H1 (cell line): ENCODE measurements at regions of chr15 and their contacts with region 1.

Region 1: GRCh38 chr15:92409006-92409405 is 15.3 kb downstream of the ST8SIA2 start:
- DNase-seq: no peak
- H3K4me3 ChIP-seq: no peak overlapping the region
- H3K27ac ChIP-seq: no peak overlapping the region
- H3K4me1 ChIP-seq: peaks cover 0 to 6% (median 0%) of the 10 kb centered on the region in 4 experiments; a peak in 2 of 7 replicates
- H3K27me3 ChIP-seq: peaks cover 0 to 2% (median 0%) of the 10 kb centered on the region in 4 experiments; a peak in 1 of 7 replicates
- CTCF ChIP-seq: no peak
- EP300 ChIP-seq: no peak
- POLR2A ChIP-seq: no peak
- RAD21 ChIP-seq: no peak

Region 2: GRCh38 chr15:92421976-92422375 is 13.0 kb after region 1 on chr15:
- CTCF ChIA-PET with region 1: interaction called, 26 read pairs
- POLR2A ChIA-PET with region 1: interaction called, 3 read pairs
- DNase-seq: no peak
- H3K4me3 ChIP-seq: no peak overlapping the region
- H3K27ac ChIP-seq: no peak overlapping the region
- H3K4me1 ChIP-seq: peaks cover 0 to 4% (median 0%) of the 10 kb centered on the region in 4 experiments; a peak in 4 of 7 replicates
- H3K27me3 ChIP-seq: no peaks in the 10 kb centered on the region
- CTCF ChIP-seq: no peak
- EP300 ChIP-seq: no peak
- POLR2A ChIP-seq: no peak
- RAD21 ChIP-seq: no peak